ENCODE measurements at regions of chr3 and their contacts with region 1.

Region 1: GRCh38 chr3:183188895-183189462 is 26.4 kb upstream of the LAMP3 start:
- DNase-seq: peak; percentile 47
- H3K4me3 ChIP-seq: no peak overlapping the region
- H3K27ac ChIP-seq: no peak overlapping the region
- H3K4me1 ChIP-seq: peaks cover 16% of the 10 kb centered on the region
- H3K27me3 ChIP-seq: no peaks in the 10 kb centered on the region
- CTCF ChIP-seq: peak; percentile 36 to 41
- POLR2A ChIP-seq: no peak

Region 2: GRCh38 chr3:183094711-183095110 is 94.3 kb before region 1 on chr3:
- CTCF ChIA-PET with region 1: no interaction called
- POLR2A ChIA-PET with region 1: no interaction called
- dilution Hi-C with region 1: no loop called
- intact Hi-C with region 1: no loop called
- DNase-seq: no peak
- H3K4me3 ChIP-seq: no peak overlapping the region
- H3K27ac ChIP-seq: no peak overlapping the region
- H3K4me1 ChIP-seq: peaks cover 8% of the 10 kb centered on the region
- H3K27me3 ChIP-seq: no peaks in the 10 kb centered on the region
- CTCF ChIP-seq: no peak
- POLR2A ChIP-seq: no peak

Region 3: DNA sequence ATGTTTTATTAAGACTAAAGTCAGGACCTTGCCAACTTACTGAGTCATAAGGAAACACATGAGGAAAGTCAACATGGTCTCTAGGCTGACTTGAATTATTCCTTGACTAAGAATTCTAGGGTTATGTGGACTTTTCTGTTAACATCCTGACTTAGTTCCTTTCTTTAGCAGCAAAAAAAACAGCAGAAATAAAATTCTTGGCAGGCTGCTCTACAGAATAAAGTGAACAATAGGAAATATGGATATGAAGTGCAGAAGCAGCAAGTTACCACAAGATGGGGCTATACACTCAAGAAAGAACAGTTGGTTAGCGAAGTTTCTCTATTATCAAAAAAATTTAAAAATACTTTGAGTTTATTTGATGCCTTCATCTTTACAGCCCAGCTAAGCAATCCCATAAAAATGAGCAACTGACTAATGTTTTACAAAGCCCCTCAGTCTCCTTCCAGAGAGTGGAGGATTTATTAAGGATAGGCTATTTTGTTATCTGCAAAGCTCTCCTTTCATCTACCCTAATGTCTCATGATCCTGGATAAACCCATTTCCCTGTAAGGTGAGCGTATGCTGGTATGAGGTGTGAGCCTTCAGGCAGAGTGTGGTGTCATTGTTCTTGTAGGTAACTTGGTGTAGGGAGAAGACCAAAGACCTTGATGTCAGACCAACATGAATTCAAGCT is 66.6 kb before region 1 on chr3:
- CTCF ChIA-PET with region 1: interaction called, 96 read pairs
- POLR2A ChIA-PET with region 1: no interaction called
- dilution Hi-C with region 1: no loop called
- intact Hi-C with region 1: loop called (anchors 1 kb)
- DNase-seq: peak; percentile 95
- H3K4me3 ChIP-seq: no peak overlapping the region
- H3K27ac ChIP-seq: peak overlapping the region; percentile 58
- H3K4me1 ChIP-seq: peaks cover 27% of the 10 kb centered on the region
- H3K27me3 ChIP-seq: peaks cover 3 to 4% of the 10 kb centered on the region in 2 experiments
- CTCF ChIP-seq: peak; percentile 56 to 66
- POLR2A ChIP-seq: no peak

Region 4: GRCh38 chr3:183233966-183234365 is 45.0 kb after region 1 on chr3:
- CTCF ChIA-PET with region 1: interaction called, 3 read pairs
- POLR2A ChIA-PET with region 1: no interaction called
- dilution Hi-C with region 1: no loop called
- intact Hi-C with region 1: loop called (anchors 5 kb)
- DNase-seq: peak; percentile 81
- H3K4me3 ChIP-seq: no peak overlapping the region
- H3K27ac ChIP-seq: no peak overlapping the region
- H3K4me1 ChIP-seq: peaks cover 3% of the 10 kb centered on the region
- H3K27me3 ChIP-seq: peaks cover 0 to 3% of the 10 kb centered on the region in 2 experiments
- CTCF ChIP-seq: no peak
- POLR2A ChIP-seq: no peak

Region 5: GRCh38 chr3:183252973-183253901 is 64.3 kb after region 1 on chr3 and contains the start of gene B3GNT5:
- CTCF ChIA-PET with region 1: interaction called, 25 read pairs
- POLR2A ChIA-PET with region 1: interaction called, 3 read pairs
- dilution Hi-C with region 1: no loop called
- intact Hi-C with region 1: loop called (anchors 2 kb)
- DNase-seq: peak; percentile 71
- H3K4me3 ChIP-seq: peak within 1 kb of the TSS; percentile 51 to 75 (median 62)
- H3K27ac ChIP-seq: peak within 1 kb of the TSS; percentile 54
- H3K4me1 ChIP-seq: peaks cover 13% of the 10 kb centered on the region
- H3K27me3 ChIP-seq: no peaks in the 10 kb centered on the region
- CTCF ChIP-seq: no peak
- POLR2A ChIP-seq: no peak
- total RNA-seq, gene B3GNT5: 25.6 and 29.4 TPM in 2 replicates

Region 6: GRCh38 chr3:183285828-183286457 is 97.0 kb after region 1 on chr3:
- CTCF ChIA-PET with region 1: interaction called, 30 read pairs
- POLR2A ChIA-PET with region 1: interaction called, 4 read pairs
- dilution Hi-C with region 1: no loop called
- intact Hi-C with region 1: loop called (anchors 1 kb)
- DNase-seq: peak; percentile 97
- H3K4me3 ChIP-seq: peak overlapping the region in 1 of 3 experiments; percentile 10
- H3K27ac ChIP-seq: peak overlapping the region; percentile 91
- H3K4me1 ChIP-seq: peaks cover 30% of the 10 kb centered on the region
- H3K27me3 ChIP-seq: no peaks in the 10 kb centered on the region
- CTCF ChIP-seq: no peak
- POLR2A ChIP-seq: no peak

Region 7: GRCh38 chr3:183385698-183386613 is 197.0 kb after region 1 on chr3:
- CTCF ChIA-PET with region 1: interaction called, 816 read pairs
- POLR2A ChIA-PET with region 1: no interaction called
- dilution Hi-C with region 1: no loop called
- intact Hi-C with region 1: loop called (anchors 1 kb)
- DNase-seq: peak; percentile 76
- H3K4me3 ChIP-seq: no peak overlapping the region
- H3K27ac ChIP-seq: no peak overlapping the region
- H3K4me1 ChIP-seq: no peaks in the 10 kb centered on the region
- H3K27me3 ChIP-seq: no peaks in the 10 kb centered on the region
- CTCF ChIP-seq: peak; percentile 65 to 71
- POLR2A ChIP-seq: no peak

Region 8: DNA sequence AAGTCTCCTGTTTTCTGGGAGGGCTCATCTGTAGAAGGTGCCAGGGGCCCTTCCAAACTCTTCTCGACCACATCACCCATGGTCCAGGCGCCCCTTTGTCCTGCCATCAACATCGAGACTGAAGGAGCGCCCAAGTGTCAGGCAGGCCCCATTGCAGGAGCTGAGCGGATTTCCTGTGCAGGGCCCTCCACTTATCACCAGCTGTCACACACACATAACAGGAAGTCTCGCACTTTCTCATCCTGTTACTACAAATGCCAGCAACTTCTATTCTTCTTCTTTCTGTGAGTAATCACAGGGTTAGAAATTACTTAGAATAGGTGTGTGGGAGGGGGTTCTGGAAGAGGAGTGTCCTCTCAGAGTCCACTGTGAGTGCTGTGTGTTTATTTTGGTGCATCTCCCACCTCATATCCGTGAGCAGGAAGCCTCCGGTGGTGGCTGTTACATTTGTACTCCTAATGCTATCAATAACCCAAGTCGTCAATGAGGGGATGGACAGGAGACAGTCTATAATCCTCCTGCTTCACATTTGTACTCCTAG is 366.6 kb after region 1 on chr3 and contains the start of gene KLHL6:
- CTCF ChIA-PET with region 1: no interaction called
- POLR2A ChIA-PET with region 1: no interaction called
- dilution Hi-C with region 1: no loop called
- intact Hi-C with region 1: loop called (anchors 10 kb)
- DNase-seq: peak; percentile 94
- H3K4me3 ChIP-seq: peak within 1 kb of the TSS; percentile 19 to 75 (median 30)
- H3K27ac ChIP-seq: peak within 1 kb of the TSS; percentile 92
- H3K4me1 ChIP-seq: peaks cover 47% of the 10 kb centered on the region
- H3K27me3 ChIP-seq: no peaks in the 10 kb centered on the region
- CTCF ChIP-seq: no peak
- POLR2A ChIP-seq: peak; percentile 52
- total RNA-seq, gene KLHL6: 12.6 and 14.8 TPM in 2 replicates

Measured in endothelial cell of umbilical vein (primary cell).